ENCODE measurements at regions of chr7 and their contacts with region 1.

Region 1: DNA sequence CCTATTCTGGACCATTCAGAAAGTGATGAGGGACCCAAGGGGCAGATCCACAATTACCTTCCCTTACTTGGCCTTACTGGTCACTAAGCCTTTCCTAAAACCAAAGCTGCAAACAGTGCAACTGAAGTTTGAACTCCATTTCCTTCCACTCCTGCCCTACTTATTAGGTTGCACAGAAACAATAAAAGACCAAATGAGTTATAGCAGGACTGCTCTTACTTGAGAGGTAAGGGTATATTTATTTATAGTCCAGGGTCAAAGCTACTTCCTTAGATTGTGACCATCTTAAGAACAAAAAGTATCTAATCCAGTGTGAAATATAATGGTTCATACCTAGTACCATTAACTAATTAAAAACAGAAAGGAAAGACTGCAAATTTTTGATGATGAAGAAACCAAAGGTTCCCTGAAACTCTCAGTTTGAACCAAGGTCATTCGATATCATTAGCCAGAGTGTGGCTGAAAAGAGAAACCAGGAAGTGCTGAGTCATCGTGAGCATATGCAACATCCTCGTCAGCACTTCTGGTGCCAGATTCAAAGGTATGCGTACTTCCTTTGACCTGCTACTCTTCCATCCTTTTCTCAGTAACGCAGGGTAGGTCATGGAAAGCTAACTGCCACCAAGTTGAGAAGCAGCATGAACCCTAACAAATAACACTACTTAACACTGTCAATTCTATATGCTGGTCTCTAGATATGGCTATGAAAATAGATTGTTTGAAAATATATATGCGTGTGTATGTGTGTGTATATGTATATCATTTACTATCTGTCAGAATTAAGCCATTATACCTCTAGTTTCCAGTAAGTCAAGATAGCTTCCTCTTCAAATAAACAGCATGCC is 26.8 kb downstream of the CDK6 start:
- DNase-seq: peak; percentile 72
- H3K4me3 Mint-ChIP-seq: peak overlapping the region; percentile 66
- H3K27ac Mint-ChIP-seq: peak overlapping the region; percentile 93
- H3K4me1 Mint-ChIP-seq: peaks cover 93% of the 10 kb centered on the region
- H3K27me3 Mint-ChIP-seq: no peaks in the 10 kb centered on the region

Region 2: GRCh38 chr7:92648067-92648466 is 161.6 kb before region 1 on chr7:
- intact Hi-C with region 1: loop called (anchors 1 kb)
- DNase-seq: no peak
- H3K4me3 Mint-ChIP-seq: peak overlapping the region; percentile 57
- H3K27ac Mint-ChIP-seq: peak overlapping the region; percentile 98
- H3K4me1 Mint-ChIP-seq: peaks cover 91% of the 10 kb centered on the region
- H3K27me3 Mint-ChIP-seq: no peaks in the 10 kb centered on the region

Region 3: GRCh38 chr7:92717993-92718716 is 91.5 kb before region 1 on chr7:
- intact Hi-C with region 1: loop called (anchors 1 kb)
- DNase-seq: peak; percentile 72
- H3K4me3 Mint-ChIP-seq: peak overlapping the region; percentile 81
- H3K27ac Mint-ChIP-seq: peak overlapping the region; percentile 85
- H3K4me1 Mint-ChIP-seq: peaks cover 72% of the 10 kb centered on the region
- H3K27me3 Mint-ChIP-seq: no peaks in the 10 kb centered on the region

Region 4: GRCh38 chr7:92797693-92798092 is 11.9 kb before region 1 on chr7:
- intact Hi-C with region 1: loop called (anchors 1 kb)
- DNase-seq: peak; percentile 27
- H3K4me3 Mint-ChIP-seq: no peak overlapping the region
- H3K27ac Mint-ChIP-seq: no peak overlapping the region
- H3K4me1 Mint-ChIP-seq: peaks cover 43% of the 10 kb centered on the region
- H3K27me3 Mint-ChIP-seq: no peaks in the 10 kb centered on the region

Region 5: GRCh38 chr7:92880212-92881090 is 70.8 kb after region 1 on chr7:
- intact Hi-C with region 1: loop called (anchors 2 kb)
- DNase-seq: no peak
- H3K4me3 Mint-ChIP-seq: no peak overlapping the region
- H3K27ac Mint-ChIP-seq: no peak overlapping the region
- H3K4me1 Mint-ChIP-seq: peaks cover 67% of the 10 kb centered on the region
- H3K27me3 Mint-ChIP-seq: no peaks in the 10 kb centered on the region

Measured in activated T-helper 1 cell treated with anti-CD3 and anti-CD28 coated beads, Interleukin-12 subunit alpha, Interleukin-12 subunit beta, Interleukin-2, Interleukin-4 antibody, amounts not matched to agents 30 ng/mL and 10 ng/mL and 1 ng/mL, durations not matched to agents 14 hours and 24 hours and 36 hours (primary cell).